ENCODE measurements at regions of chr11 and their contacts with region 1.

Region 1: DNA sequence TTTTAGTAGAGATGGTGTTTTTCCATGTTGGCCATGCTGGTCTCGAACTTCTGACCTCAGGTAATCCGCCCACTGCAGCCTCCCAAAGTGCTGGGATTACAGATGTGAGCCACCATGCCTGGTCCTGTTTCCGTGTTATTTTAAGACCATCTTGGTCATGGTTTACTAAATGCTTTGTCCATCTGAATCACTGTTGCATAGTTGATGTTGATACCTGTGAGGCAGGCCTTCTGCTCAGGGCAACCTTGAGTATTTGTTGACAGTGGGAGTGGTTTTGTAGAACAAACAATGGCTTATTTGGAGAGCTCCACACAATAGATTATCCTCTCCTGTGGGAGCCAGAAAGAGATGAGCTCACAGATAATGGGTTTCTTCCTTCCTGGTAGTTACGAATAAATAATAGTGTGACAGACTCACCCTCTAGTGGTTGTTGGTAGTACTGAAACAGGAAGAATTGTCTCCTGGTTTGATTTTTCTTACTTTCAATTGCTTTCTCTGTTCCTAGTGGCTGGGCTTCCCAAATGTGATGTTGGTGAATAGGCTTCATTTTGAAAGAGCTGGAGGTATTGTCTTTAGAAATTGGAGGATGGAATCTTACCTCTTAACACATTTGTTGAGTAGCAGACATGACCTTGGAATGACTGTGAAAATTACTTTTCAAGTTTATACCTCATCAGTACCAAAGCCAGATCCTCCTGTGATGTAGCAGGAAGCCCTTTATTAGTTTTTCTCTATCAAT is 39.0 kb downstream of the CTNND1 start:
- DNase-seq: no peak
- H3K4me3 Mint-ChIP-seq: no peak overlapping the region
- H3K27ac Mint-ChIP-seq: peak overlapping the region; percentile 54
- H3K4me1 Mint-ChIP-seq: peaks cover 37% of the 10 kb centered on the region
- H3K27me3 Mint-ChIP-seq: no peaks in the 10 kb centered on the region

Region 2: DNA sequence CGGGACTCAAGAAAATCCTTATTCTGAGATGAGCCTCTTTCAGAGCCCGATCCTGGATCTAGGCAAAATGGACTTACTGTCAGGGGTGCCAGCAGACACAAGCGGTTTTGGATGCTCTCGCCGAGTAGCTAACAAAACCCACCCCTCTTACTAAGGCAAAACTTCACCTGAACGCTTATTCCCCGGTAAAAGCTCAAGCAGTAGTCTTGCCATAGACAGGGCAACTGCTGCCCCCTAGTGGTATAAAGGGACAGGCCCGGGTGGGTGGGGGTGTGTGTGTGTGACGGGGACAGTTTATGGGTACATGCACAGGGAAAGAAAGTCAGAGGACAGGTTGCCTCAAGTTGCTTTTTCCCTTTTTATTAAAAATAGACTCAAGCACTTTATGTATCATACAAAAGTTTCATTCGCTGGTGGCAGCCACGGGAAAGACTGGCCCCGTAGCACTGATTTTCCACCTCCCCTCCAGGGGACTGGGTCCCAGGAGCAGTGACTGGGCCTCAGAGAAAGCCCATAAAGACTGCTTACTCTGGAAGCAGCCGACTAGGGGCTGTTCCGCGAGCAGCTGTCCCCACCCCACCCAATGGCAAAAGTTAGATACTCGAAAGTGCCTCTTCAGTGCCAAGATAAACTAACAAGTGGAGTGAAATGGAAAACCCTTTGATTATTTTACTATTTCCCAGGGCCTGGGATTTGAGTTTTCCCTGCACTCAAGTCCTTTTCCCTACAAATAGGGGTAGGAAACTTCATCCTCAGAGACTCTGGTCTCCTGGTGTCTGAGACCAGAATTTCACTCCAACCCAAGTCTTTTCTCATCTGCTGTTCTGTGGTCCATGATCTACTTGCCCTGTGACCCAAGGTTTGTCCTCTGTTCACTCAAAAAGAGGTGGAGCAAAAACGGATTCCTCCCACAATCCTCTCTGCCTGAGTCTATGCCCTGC is 155.6 kb before region 1 on chr11:
- CTCF ChIA-PET with region 1: interaction called, 18 read pairs
- DNase-seq: peak; percentile 92
- H3K4me3 Mint-ChIP-seq: no peak overlapping the region
- H3K27ac Mint-ChIP-seq: no peak overlapping the region
- H3K4me1 Mint-ChIP-seq: peaks cover 47% of the 10 kb centered on the region
- H3K27me3 Mint-ChIP-seq: peaks cover 81% of the 10 kb centered on the region

Region 3: GRCh38 chr11:57741132-57742086 is 59.2 kb before region 1 on chr11 and contains the start of gene SELENOH:
- CTCF ChIA-PET with region 1: interaction called, 22 read pairs
- DNase-seq: peak; percentile 98
- H3K4me3 Mint-ChIP-seq: peak within 1 kb of the TSS; percentile 96
- H3K27ac Mint-ChIP-seq: peak within 1 kb of the TSS; percentile 98
- H3K4me1 Mint-ChIP-seq: peaks cover 45% of the 10 kb centered on the region
- H3K27me3 Mint-ChIP-seq: no peaks in the 10 kb centered on the region

Region 4: DNA sequence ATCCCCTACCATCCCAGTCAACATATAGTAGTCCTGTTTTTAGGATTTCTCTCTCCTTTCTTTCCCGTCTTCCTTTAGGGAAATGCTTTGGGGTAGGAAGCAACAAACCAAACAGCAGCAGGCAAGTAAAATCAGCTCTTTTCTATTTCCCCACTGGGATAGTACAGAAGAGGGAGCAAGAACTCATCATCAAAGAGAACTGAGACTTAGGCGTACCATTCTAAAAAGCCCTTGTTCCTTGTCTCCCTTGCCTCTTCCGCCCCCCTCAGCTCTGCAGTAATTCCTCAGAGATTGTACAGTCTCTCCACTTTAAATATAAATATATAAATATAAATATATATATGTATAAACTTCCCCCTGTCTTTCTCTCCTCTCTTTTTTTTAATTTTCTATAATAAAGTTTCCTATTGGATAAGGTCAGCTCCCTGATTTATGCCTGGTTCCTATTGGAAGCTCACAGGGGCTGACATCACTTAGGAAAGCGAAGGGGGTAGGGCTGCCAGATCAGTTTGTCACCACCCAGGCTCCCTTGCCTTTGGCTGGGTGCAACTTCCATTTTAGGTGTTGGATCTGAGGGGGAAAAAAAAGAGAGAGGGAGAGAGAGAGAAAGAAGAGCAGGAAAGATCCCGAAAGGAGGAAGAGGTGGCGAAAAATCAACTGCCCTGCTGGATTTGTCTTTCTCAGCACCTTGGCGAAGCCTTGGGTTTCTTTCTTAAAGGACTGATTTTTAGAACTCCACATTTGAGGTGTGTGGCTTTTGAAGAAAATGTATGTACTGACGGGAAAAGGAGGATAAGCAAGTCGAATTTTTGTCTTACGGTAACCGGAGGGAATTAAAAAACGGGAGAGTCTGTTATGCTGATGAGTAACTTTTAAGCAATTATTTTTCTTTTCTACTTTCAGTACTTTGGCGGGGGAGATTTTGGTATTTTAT is 39.0 kb before region 1 on chr11 and contains the start of gene CTNND1:
- CTCF ChIA-PET with region 1: interaction called, 43 read pairs
- DNase-seq: no peak
- H3K4me3 Mint-ChIP-seq: peak within 1 kb of the TSS; percentile 5
- H3K27ac Mint-ChIP-seq: no peak within 1 kb of the TSS
- H3K4me1 Mint-ChIP-seq: peaks cover 19% of the 10 kb centered on the region
- H3K27me3 Mint-ChIP-seq: peaks cover 23% of the 10 kb centered on the region

Measured in activated naive CD4-positive, alpha-beta T cell treated with anti-CD3 and anti-CD28 coated beads, Interleukin-2, amount 10 ng/mL, durations not matched to agents 7 days and 5 days (primary cell).